ENCODE measurements at regions of chr20 and their contacts with region 1.

Region 1: GRCh38 chr20:62734881-62735821 is 26.5 kb downstream of the NTSR1 start:
- DNase-seq: no peak
- H3K4me3 ChIP-seq: no peak overlapping the region
- H3K27ac ChIP-seq: no peak overlapping the region
- H3K4me1 ChIP-seq: peaks cover 0 to 2% (median 0%) of the 10 kb centered on the region in 4 experiments; a peak in 1 of 7 replicates
- H3K27me3 ChIP-seq: 0 out of 7 replicates have a peak, but pooled peaks cover 0 to 3% (median 0%) of the 10 kb centered on the region in 4 experiments
- CTCF ChIP-seq: no peak
- EP300 ChIP-seq: no peak
- POLR2A ChIP-seq: no peak
- RAD21 ChIP-seq: no peak

Region 2: GRCh38 chr20:62642040-62642665 is 93.0 kb before region 1 on chr20 and contains the start of gene SLCO4A1:
- CTCF ChIA-PET with region 1: no interaction called
- POLR2A ChIA-PET with region 1: no interaction called
- DNase-seq: peak in 1 of 2 experiments; percentile 84
- H3K4me3 ChIP-seq: peak within 1 kb of the TSS; percentile 45 to 75 (median 64)
- H3K27ac ChIP-seq: no peak within 1 kb of the TSS
- H3K4me1 ChIP-seq: peaks cover 0 to 11% (median 0%) of the 10 kb centered on the region in 4 experiments; a peak in 3 of 7 replicates
- H3K27me3 ChIP-seq: peaks cover 3 to 43% (median 33%) of the 10 kb centered on the region in 4 experiments; a peak in 6 of 7 replicates
- CTCF ChIP-seq: no peak
- EP300 ChIP-seq: no peak
- POLR2A ChIP-seq: no peak
- RAD21 ChIP-seq: no peak
- total RNA-seq, gene SLCO4A1: 18.2 and 18.5 TPM in 2 replicates

Region 3: GRCh38 chr20:62723351-62723750 is 11.8 kb before region 1 on chr20:
- CTCF ChIA-PET with region 1: interaction called, 13 read pairs
- POLR2A ChIA-PET with region 1: no interaction called
- DNase-seq: no peak
- H3K4me3 ChIP-seq: no peak overlapping the region
- H3K27ac ChIP-seq: no peak overlapping the region
- H3K4me1 ChIP-seq: no peaks in the 10 kb centered on the region
- H3K27me3 ChIP-seq: no peaks in the 10 kb centered on the region; a peak in 1 of 7 replicates
- CTCF ChIP-seq: no peak
- EP300 ChIP-seq: no peak
- POLR2A ChIP-seq: no peak
- RAD21 ChIP-seq: no peak